ENCODE measurements at regions of chr6 and their contacts with region 1.

Region 1: DNA sequence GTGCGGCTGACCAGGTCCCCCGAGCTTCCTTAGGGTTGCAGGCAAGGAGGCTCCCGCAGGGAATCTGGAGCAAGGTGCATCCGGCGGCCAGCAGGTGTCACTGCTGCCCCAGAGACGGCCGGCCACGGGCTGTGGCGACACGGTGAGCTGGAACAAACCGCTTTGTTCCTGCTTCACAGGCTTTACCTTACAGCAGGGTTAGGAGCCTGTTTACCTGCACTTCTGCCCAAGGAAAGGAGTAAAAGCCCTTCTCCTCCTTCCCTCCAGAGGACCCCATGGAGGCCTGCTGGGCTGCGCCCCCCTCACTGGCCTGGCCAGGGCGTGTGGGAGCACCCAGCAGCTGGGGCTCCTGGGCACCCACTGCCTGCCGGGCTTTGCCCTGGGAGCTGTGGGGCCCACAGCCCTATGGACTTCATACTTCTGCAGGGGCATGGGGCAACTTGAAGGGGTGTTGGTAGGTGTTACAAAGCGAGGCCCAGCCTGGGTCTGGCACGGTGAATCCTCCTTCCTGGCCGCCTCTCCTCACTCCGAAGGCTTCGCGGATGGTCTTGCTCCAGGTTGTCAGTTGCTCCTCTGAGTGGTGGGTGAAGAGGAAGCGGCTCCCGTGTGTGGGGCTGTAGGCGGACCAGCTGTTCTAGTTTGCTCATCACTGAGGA is 88.4 kb downstream of the CDC5L start:
- DNase-seq: peak; percentile 93
- H3K4me3 Mint-ChIP-seq: no peak overlapping the region
- H3K27ac Mint-ChIP-seq: no peak overlapping the region
- H3K4me1 Mint-ChIP-seq: no peaks in the 10 kb centered on the region
- H3K27me3 Mint-ChIP-seq: peaks cover 13% of the 10 kb centered on the region

Region 2: GRCh38 chr6:44593539-44593944 is 117.6 kb after region 1 on chr6:
- intact Hi-C with region 1: loop called (anchors 10 kb)
- DNase-seq: peak; percentile 85
- H3K4me3 Mint-ChIP-seq: no peak overlapping the region
- H3K27ac Mint-ChIP-seq: no peak overlapping the region
- H3K4me1 Mint-ChIP-seq: no peaks in the 10 kb centered on the region
- H3K27me3 Mint-ChIP-seq: peaks cover 13% of the 10 kb centered on the region

Region 3: GRCh38 chr6:44655412-44656342 is 179.8 kb after region 1 on chr6:
- intact Hi-C with region 1: loop called (anchors 10 kb)
- DNase-seq: peak; percentile 92
- H3K4me3 Mint-ChIP-seq: peak overlapping the region; percentile 51
- H3K27ac Mint-ChIP-seq: peak overlapping the region; percentile 80
- H3K4me1 Mint-ChIP-seq: peaks cover 13% of the 10 kb centered on the region
- H3K27me3 Mint-ChIP-seq: peaks cover 2% of the 10 kb centered on the region

Region 4: DNA sequence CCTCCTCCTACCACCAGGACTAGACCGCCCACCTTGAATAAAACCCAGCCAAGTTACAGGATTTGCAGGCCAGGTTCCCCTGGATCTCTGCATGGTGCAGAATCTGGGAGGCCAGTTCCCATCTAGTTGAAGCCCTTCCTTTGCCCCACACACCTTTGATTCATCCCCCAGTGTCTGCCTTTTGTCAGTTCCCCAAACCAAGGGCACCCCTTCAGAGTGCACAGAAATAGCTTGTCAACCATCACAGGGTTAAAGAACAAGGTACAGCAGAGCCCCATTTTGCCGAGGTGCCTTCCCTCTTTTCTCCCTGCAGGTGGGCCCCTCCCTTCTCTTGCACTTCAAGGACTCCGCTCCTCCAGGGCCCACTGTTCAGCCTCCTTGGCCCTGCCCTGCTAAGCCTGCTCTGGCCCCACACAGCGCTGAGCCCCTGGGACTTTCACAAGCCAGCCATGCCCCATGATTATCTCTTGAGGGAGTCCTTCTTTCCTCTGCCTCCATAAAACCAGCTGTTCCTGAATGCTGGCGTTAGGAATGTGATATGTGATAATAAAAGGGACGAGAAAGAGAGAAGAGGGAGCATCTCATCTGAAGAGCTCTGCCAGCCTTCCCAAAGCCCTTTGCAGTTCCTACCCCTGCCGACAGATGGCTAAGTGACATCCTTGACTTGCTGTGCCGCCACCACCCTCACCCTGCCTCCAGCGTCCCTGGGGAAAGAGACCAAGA is 191.9 kb after region 1 on chr6:
- intact Hi-C with region 1: no loop called
- DNase-seq: peak; percentile 74
- H3K4me3 Mint-ChIP-seq: no peak overlapping the region
- H3K27ac Mint-ChIP-seq: no peak overlapping the region
- H3K4me1 Mint-ChIP-seq: peaks cover 1% of the 10 kb centered on the region
- H3K27me3 Mint-ChIP-seq: peaks cover 8% of the 10 kb centered on the region

Measured in activated CD4-positive, alpha-beta T cell treated with anti-CD3 and anti-CD28 coated beads, Interleukin-2, amount 10 ng/mL, durations not matched to agents 24 days and 14 days (primary cell).